ENCODE measurements at regions of chrX and their contacts with region 1.

Region 1: DNA sequence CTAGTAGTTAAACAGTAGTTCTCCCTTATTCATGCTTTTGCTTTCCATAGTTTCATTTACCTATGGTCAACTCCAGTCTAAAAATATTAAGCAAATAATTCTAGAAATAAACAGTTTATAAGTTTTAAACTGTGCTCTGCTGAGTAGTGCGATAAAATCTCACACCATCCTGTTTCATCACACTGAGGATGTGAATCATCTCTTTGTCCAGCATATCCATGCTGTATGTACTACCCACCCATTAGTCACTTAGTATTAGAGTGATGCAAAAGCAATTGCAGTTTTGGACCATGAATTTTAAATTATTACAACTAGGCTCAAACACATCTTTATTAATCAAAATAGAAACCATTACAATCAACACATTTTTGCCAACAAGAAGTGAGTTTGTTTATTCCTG is 187.4 kb downstream of the TEX13C start:
- DNase-seq: peak; percentile 67
- H3K4me3 Mint-ChIP-seq: no peak overlapping the region
- H3K27ac Mint-ChIP-seq: no peak overlapping the region
- H3K4me1 Mint-ChIP-seq: peaks cover 17% of the 10 kb centered on the region
- H3K27me3 Mint-ChIP-seq: no peaks in the 10 kb centered on the region
- CTCF ChIP-seq: no peak

Region 2: DNA sequence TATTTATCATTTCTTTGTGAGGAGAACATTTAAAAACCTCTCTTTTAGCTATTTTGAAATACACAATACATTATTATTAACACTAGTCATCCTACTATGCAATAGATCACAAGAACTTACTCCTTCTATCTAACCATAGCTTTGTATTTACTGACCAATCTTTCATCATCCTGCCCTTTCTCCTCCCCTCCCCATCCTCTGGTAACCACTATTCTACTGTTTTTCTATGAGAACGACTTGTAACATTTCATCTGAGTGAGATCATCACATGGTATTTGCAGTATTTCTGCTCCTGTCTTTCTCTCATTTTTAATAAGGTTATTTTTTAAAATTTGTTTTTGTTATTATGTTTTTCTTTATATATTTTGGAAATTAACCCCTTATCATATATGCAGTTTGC is 144.3 kb after region 1 on chrX:
- CTCF ChIA-PET with region 1: no interaction called
- POLR2A ChIA-PET with region 1: no interaction called
- intact Hi-C with region 1: loop called (anchors 10 kb)
- DNase-seq: peak; percentile 24
- H3K4me3 Mint-ChIP-seq: peak overlapping the region; percentile 19
- H3K27ac Mint-ChIP-seq: peak overlapping the region; percentile 23
- H3K4me1 Mint-ChIP-seq: peaks cover 15% of the 10 kb centered on the region
- H3K27me3 Mint-ChIP-seq: no peaks in the 10 kb centered on the region
- CTCF ChIP-seq: no peak